ENCODE measurements at regions of chr1 and their contacts with region 1.

Region 1: DNA sequence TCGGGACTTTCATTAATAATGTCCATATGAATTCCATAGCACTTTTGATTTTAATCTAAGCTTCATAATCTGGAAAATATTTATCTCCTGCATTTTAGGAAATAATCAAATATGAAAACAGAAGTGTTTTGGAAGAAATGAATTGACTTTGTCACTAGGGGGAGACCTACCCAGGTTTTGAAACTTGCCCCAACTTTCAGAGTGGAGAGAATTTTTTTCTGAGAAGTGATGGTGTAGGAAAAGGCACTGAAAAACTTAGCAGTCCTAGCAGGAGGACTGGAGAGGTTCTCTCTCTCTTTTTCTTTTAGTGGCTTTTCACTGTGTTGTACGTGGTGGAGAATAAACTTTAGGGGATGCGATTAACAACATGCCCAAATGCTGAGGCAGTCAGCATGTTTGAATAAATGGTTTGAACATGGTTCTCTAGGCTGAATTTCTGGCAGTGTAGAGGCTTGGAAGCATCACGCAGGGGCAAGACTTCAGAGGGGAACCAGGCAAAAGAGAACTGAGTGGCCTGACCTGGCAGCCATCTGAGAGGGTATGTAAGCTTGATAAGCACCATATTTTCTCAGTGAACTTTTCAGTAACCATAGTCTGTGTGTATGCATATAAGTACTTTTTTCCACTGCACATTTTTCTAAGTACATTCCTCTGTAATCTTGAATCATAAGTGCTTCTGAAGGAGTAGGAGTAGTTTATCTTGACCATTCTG is 68.3 kb upstream of the NEK7 start:
- DNase-seq: no peak
- ATAC-seq: no peak
- H3K4me3 ChIP-seq: no peak overlapping the region
- H3K27ac ChIP-seq: no peak overlapping the region
- H3K4me1 ChIP-seq: no peaks in the 10 kb centered on the region
- H3K27me3 ChIP-seq: no peaks in the 10 kb centered on the region
- CTCF ChIP-seq: peak; percentile 23 to 61 (median 47)
- POLR2A ChIP-seq: no peak

Region 2: GRCh38 chr1:197327776-197328364 is 760.6 kb before region 1 on chr1:
- in situ Hi-C with region 1: no loop called
- intact Hi-C with region 1: no loop called
- DNase-seq: no peak
- ATAC-seq: no peak
- H3K4me3 ChIP-seq: no peak overlapping the region
- H3K27ac ChIP-seq: no peak overlapping the region
- H3K4me1 ChIP-seq: no peaks in the 10 kb centered on the region
- H3K27me3 ChIP-seq: no peaks in the 10 kb centered on the region
- CTCF ChIP-seq: peak; percentile 28 to 65 (median 41)
- POLR2A ChIP-seq: no peak

Region 3: GRCh38 chr1:197598935-197599334 is 489.6 kb before region 1 on chr1:
- in situ Hi-C with region 1: no loop called
- intact Hi-C with region 1: no loop called
- DNase-seq: no peak
- ATAC-seq: no peak
- H3K4me3 ChIP-seq: no peak overlapping the region
- H3K27ac ChIP-seq: no peak overlapping the region
- H3K4me1 ChIP-seq: no peaks in the 10 kb centered on the region
- H3K27me3 ChIP-seq: no peaks in the 10 kb centered on the region
- CTCF ChIP-seq: no peak
- POLR2A ChIP-seq: no peak

Region 4: GRCh38 chr1:198056255-198056654 is 32.3 kb before region 1 on chr1:
- in situ Hi-C with region 1: no loop called
- intact Hi-C with region 1: no loop called
- DNase-seq: no peak
- ATAC-seq: no peak
- H3K4me3 ChIP-seq: no peak overlapping the region
- H3K27ac ChIP-seq: no peak overlapping the region
- H3K4me1 ChIP-seq: no peaks in the 10 kb centered on the region
- H3K27me3 ChIP-seq: no peaks in the 10 kb centered on the region
- CTCF ChIP-seq: no peak
- POLR2A ChIP-seq: no peak

Region 5: GRCh38 chr1:198157241-198157846 is 68.8 kb after region 1 on chr1:
- in situ Hi-C with region 1: no loop called
- intact Hi-C with region 1: no loop called
- DNase-seq: peak; percentile 91
- ATAC-seq: peak; percentile 76 to 82
- H3K4me3 ChIP-seq: peak overlapping the region; percentile 85 to 96 (median 94)
- H3K27ac ChIP-seq: peak overlapping the region; percentile 97 to 100 (median 98)
- H3K4me1 ChIP-seq: peaks cover 39 to 59% of the 10 kb centered on the region in 2 donors
- H3K27me3 ChIP-seq: no peaks in the 10 kb centered on the region
- CTCF ChIP-seq: no peak
- POLR2A ChIP-seq: peak; percentile 53 to 82

Region 6: DNA sequence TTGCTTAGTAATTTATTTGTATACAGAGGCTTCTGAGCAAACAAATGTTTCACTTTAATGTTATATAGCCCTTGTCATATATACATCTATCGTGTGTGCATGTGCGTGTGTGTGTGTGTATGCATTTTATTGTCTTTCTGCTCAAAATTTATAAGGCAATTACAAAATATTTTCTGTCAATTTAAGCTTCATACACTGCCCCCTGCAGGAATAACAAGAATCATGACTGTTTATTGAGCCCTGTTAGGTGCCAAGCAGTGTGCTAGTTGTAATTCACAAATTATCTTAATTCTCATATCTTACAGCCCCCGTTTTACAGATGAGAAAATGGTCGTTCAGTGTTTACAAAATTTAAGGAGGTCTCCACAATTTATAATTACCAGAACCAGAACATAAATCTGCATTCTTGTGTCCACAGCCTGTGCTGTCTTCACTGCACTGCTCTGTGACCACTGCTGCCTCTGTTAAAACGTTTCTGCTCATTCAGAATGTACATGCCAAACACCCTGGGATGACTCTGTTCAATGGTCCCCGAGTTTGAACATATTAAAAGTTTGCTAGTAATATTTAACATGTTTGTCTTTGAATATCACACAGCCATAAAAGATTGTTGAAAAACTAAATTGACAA is 270.6 kb after region 1 on chr1:
- in situ Hi-C with region 1: loop called in 2 of 4 experiments (anchors 25 kb)
- intact Hi-C with region 1: loop called (anchors 10 kb)
- DNase-seq: no peak
- ATAC-seq: no peak
- H3K4me3 ChIP-seq: no peak overlapping the region
- H3K27ac ChIP-seq: no peak overlapping the region
- H3K4me1 ChIP-seq: no peaks in the 10 kb centered on the region
- H3K27me3 ChIP-seq: no peaks in the 10 kb centered on the region
- CTCF ChIP-seq: peak; percentile 12 to 31 (median 28)
- POLR2A ChIP-seq: no peak

Measured in gastrocnemius medialis (tissue), 4 donors.